AG04449 (cell line): ENCODE measurements at regions of chr9 and their contacts with region 1.

Region 1: GRCh38 chr9:72592502-72593403 is 71.3 kb downstream of the TMC1 start:
- DNase-seq: no peak
- H3K4me3 ChIP-seq: no peak overlapping the region
- CTCF ChIP-seq: peak; percentile 59

Region 2: GRCh38 chr9:72292256-72292682 is 300.5 kb before region 1 on chr9:
- CTCF ChIA-PET with region 1: interaction called, 13 read pairs
- POLR2A ChIA-PET with region 1: no interaction called
- DNase-seq: no peak
- H3K4me3 ChIP-seq: no peak overlapping the region
- CTCF ChIP-seq: peak; percentile 14

Region 3: GRCh38 chr9:72356041-72356582 is 236.6 kb before region 1 on chr9:
- CTCF ChIA-PET with region 1: interaction called, 74 read pairs
- POLR2A ChIA-PET with region 1: interaction called, 3 read pairs
- DNase-seq: no peak
- H3K4me3 ChIP-seq: no peak overlapping the region
- CTCF ChIP-seq: no peak

Region 4: GRCh38 chr9:72554221-72554641 is 38.5 kb before region 1 on chr9:
- CTCF ChIA-PET with region 1: interaction called, 14 read pairs
- POLR2A ChIA-PET with region 1: no interaction called
- DNase-seq: peak; percentile 98
- H3K4me3 ChIP-seq: no peak overlapping the region
- CTCF ChIP-seq: no peak

Region 5: GRCh38 chr9:72577212-72577753 is 15.5 kb before region 1 on chr9:
- CTCF ChIA-PET with region 1: interaction called, 86 read pairs
- POLR2A ChIA-PET with region 1: interaction called, 6 read pairs
- DNase-seq: no peak
- H3K4me3 ChIP-seq: no peak overlapping the region
- CTCF ChIP-seq: no peak

Region 6: DNA sequence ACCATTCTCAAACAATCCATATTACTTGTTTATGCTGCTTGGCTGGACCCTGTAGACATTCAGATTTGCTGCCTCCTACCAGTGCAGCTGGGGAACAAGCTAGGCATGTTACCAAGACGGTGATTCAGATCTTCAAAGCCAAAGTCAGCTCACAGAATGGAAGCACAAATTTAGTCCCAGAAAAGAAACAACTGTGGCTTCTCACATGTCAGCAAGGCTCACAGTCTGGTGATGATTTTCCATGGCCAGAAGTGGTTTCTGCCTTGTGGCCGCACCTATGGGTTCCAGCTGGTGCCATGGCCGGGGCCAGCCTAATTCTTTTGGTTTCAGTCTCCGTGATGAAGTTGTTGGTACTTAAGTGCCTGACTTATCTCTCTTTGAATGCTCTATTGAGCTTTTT is 110.8 kb after region 1 on chr9:
- CTCF ChIA-PET with region 1: no interaction called
- POLR2A ChIA-PET with region 1: no interaction called
- DNase-seq: no peak
- H3K4me3 ChIP-seq: no peak overlapping the region
- CTCF ChIP-seq: no peak